Naive thymus-derived CD4-positive, alpha-beta T cell (primary cell): ENCODE measurements at regions of chr6 and their contacts with region 1.

Region 1: DNA sequence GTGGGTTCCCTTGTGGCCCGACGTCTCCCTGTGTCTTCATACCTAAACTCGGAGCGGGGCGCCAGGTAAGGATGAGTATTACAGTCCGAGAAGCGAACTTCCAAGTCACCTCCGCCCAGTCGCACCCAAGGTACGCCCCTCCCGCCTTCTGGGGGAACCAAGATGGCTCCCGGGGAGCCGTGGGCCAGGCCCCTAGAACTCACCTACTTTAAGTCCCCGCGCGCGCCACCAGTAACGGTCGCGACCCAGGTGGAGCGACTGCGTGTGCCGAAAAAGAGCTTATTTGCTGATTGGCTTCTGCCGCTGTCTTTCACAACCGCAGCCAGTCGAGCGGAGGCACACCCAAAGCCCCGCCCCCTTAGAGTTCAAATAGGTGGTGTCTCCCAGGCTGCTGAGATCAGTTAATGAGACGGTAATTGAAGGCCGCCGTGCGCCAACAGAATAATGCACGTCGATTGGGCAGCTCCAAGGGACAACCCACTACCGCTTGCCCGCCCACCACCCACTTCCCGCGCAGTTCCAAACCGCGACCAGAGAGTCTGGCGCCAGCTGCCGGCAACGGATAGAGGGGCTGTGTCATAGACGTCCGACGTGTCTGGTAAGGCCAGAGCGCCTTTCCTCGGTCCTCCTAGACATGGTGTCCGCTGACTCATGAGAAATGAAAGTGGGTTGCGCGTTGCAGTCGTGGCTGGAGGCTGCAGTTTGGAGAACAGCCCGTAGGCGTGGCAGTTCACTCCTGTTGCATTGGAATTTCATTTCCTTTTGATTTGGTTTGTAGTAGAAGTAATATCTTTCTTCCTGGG is at the start of gene MDC1:
- DNase-seq: peak; percentile 83 to 100 (median 99)
- ATAC-seq: peak; percentile 84
- H3K4me3 ChIP-seq: peak within 1 kb of the TSS; percentile 73
- H3K4me3 Mint-ChIP-seq: peak within 1 kb of the TSS; percentile 90 to 99 (median 96)
- H3K27ac ChIP-seq: peak within 1 kb of the TSS; percentile 84
- H3K27ac Mint-ChIP-seq: peak within 1 kb of the TSS; percentile 97 to 100 (median 99)
- H3K4me1 ChIP-seq: peaks cover 20 to 22% of the 10 kb centered on the region in 2 donors
- H3K4me1 Mint-ChIP-seq: peaks cover 30 to 60% (median 52%) of the 10 kb centered on the region in 7 donors
- H3K27me3 ChIP-seq: no peaks in the 10 kb centered on the region
- H3K27me3 Mint-ChIP-seq: no peaks in the 10 kb centered on the region
- total RNA-seq, gene MDC1: 40.3 to 78.9 (median 62.0) TPM

Region 2: DNA sequence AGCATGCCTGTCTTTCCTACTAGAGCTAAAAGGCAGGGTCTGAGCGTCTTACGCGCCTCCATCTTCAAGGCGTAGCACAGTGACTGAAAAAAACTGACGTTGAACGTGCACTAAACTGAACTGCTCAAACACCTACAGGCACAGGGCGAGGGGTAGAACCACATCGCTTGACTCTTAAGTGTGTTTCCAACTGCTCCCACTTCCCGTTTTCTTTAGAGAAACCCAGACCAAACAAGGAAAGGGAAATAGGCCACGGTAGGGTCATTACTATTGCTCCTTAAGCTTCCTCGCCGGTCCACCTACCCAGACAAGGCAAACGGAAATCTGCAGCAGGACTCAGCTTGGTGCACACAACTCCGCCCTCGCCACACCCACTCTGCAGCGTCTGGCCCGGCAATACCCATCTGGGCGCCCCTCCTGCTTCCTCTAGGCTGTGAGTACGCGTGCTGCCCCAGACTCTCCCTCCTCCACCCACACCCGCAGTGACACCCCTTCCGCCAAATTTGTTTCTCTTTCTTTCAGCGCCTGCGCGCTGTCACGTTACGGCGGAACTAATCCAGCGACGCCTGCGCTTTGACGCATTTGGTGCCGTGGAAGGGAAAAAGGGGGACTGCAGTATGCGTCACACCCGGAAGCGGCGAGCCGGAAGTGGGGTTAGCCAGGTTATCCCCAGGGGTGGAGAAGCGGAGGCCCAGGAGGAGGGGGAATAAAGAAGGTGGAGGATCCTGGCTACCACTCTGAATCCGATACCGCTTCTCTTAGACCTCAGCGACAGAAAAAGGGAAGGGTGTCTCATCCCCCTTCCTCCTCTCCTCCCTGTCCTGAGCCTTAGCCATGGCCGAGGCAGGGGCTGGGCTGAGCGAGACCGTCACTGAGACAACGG is 650.4 kb before region 1 on chr6 and contains the start of gene PPP1R11:
- CTCF ChIA-PET with region 1: no interaction called
- POLR2A ChIA-PET with region 1: no interaction called
- intact Hi-C with region 1: loop called in 1 of 2 experiments (anchors 10 kb)
- DNase-seq: peak; percentile 84 to 100 (median 99)
- ATAC-seq: peak; percentile 99
- H3K4me3 ChIP-seq: peak within 1 kb of the TSS; percentile 94
- H3K4me3 Mint-ChIP-seq: peak within 1 kb of the TSS; percentile 87 to 100 (median 98)
- H3K27ac ChIP-seq: peak within 1 kb of the TSS; percentile 96
- H3K27ac Mint-ChIP-seq: peak within 1 kb of the TSS; percentile 96 to 100 (median 99)
- H3K4me1 ChIP-seq: peaks cover 28 to 41% of the 10 kb centered on the region in 2 donors
- H3K4me1 Mint-ChIP-seq: peaks cover 43 to 77% (median 71%) of the 10 kb centered on the region in 7 donors
- H3K27me3 ChIP-seq: no peaks in the 10 kb centered on the region
- H3K27me3 Mint-ChIP-seq: peaks cover 10 to 22% (median 16%) of the 10 kb centered on the region in 5 donors
- total RNA-seq, gene PPP1R11: 49.4 to 67.1 (median 62.7) TPM

Region 3: GRCh38 chr6:30386166-30386565 is 331.1 kb before region 1 on chr6:
- CTCF ChIA-PET with region 1: no interaction called
- POLR2A ChIA-PET with region 1: no interaction called
- intact Hi-C with region 1: no loop called
- DNase-seq: no peak
- ATAC-seq: no peak
- H3K4me3 ChIP-seq: no peak overlapping the region
- H3K4me3 Mint-ChIP-seq: no peak overlapping the region
- H3K27ac ChIP-seq: no peak overlapping the region
- H3K27ac Mint-ChIP-seq: no peak overlapping the region
- H3K4me1 ChIP-seq: no peaks in the 10 kb centered on the region
- H3K4me1 Mint-ChIP-seq: no peaks in the 10 kb centered on the region
- H3K27me3 ChIP-seq: peaks cover 0 to 6% of the 10 kb centered on the region in 2 donors
- H3K27me3 Mint-ChIP-seq: peaks cover 80 to 84% (median 81%) of the 10 kb centered on the region in 5 donors

Region 4: DNA sequence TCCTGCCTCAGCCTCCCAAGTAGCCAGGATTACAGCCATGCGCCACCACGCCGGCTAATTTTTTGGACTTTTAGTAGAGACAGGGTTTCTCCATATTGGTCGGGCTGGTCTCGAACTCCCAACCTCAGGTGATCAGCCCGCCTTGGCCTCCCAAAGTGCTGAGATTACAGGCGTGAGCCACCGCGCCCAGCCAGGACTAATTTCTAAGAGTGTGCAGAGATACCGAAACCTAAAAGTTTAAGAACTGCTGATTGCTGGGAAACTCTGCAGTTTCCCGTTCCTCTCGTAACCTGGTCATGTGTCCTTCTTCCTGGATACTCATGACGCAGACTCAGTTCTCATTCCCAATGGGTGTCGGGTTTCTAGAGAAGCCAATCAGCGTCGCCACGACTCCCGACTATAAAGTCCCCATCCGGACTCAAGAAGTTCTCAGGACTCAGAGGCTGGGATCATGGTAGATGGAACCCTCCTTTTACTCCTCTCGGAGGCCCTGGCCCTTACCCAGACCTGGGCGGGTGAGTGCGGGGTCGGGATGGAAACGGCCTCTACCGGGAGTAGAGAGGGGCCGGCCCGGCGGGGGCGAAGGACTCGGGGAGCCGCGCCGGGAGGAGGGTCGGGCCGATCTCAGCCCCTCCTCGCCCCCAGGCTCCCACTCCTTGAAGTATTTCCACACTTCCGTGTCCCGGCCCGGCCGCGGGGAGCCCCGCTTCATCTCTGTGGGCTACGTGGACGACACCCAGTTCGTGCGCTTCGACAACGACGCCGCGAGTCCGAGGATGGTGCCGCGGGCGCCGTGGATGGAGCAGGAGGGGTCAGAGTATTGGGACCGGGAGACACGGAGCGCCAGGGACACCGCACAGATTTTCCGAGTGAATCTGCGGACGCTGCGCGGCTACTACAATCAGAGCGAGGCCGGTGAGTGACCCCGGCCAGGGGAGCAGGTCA is 227.9 kb before region 1 on chr6 and contains the start of gene HLA-E:
- CTCF ChIA-PET with region 1: interaction called, 14 read pairs
- POLR2A ChIA-PET with region 1: interaction called, 3 read pairs
- intact Hi-C with region 1: loop called (anchors 1 kb)
- DNase-seq: peak; percentile 62 to 99 (median 95)
- ATAC-seq: peak; percentile 89
- H3K4me3 ChIP-seq: peak within 1 kb of the TSS; percentile 83
- H3K4me3 Mint-ChIP-seq: peak within 1 kb of the TSS; percentile 94 to 100 (median 99)
- H3K27ac ChIP-seq: peak within 1 kb of the TSS; percentile 97
- H3K27ac Mint-ChIP-seq: peak within 1 kb of the TSS; percentile 96 to 99 (median 99)
- H3K4me1 ChIP-seq: peaks cover 26 to 33% of the 10 kb centered on the region in 2 donors
- H3K4me1 Mint-ChIP-seq: peaks cover 33 to 61% (median 46%) of the 10 kb centered on the region in 7 donors
- H3K27me3 ChIP-seq: no peaks in the 10 kb centered on the region
- H3K27me3 Mint-ChIP-seq: peaks cover 0 to 7% (median 0%) of the 10 kb centered on the region in 5 donors
- total RNA-seq, gene HLA-E: 614 to 1,412 (median 1,095) TPM

Region 5: GRCh38 chr6:30626484-30627366 is 90.5 kb before region 1 on chr6 and contains the start of gene ATAT1:
- CTCF ChIA-PET with region 1: interaction called, 3 read pairs
- POLR2A ChIA-PET with region 1: interaction called, 4 read pairs
- intact Hi-C with region 1: loop called in 1 of 2 experiments (anchors 1 kb)
- DNase-seq: peak; percentile 80 to 90 (median 85)
- ATAC-seq: peak; percentile 100
- H3K4me3 ChIP-seq: peak within 1 kb of the TSS; percentile 84
- H3K4me3 Mint-ChIP-seq: peak within 1 kb of the TSS; percentile 88 to 97 (median 92)
- H3K27ac ChIP-seq: peak within 1 kb of the TSS; percentile 92
- H3K27ac Mint-ChIP-seq: peak within 1 kb of the TSS; percentile 89 to 97 (median 96)
- H3K4me1 ChIP-seq: peaks cover 10 to 13% of the 10 kb centered on the region in 2 donors
- H3K4me1 Mint-ChIP-seq: peaks cover 15 to 35% (median 24%) of the 10 kb centered on the region in 7 donors
- H3K27me3 ChIP-seq: no peaks in the 10 kb centered on the region
- H3K27me3 Mint-ChIP-seq: no peaks in the 10 kb centered on the region
- total RNA-seq, gene ATAT1: 7.0 to 12.0 (median 9.5) TPM

Region 6: DNA sequence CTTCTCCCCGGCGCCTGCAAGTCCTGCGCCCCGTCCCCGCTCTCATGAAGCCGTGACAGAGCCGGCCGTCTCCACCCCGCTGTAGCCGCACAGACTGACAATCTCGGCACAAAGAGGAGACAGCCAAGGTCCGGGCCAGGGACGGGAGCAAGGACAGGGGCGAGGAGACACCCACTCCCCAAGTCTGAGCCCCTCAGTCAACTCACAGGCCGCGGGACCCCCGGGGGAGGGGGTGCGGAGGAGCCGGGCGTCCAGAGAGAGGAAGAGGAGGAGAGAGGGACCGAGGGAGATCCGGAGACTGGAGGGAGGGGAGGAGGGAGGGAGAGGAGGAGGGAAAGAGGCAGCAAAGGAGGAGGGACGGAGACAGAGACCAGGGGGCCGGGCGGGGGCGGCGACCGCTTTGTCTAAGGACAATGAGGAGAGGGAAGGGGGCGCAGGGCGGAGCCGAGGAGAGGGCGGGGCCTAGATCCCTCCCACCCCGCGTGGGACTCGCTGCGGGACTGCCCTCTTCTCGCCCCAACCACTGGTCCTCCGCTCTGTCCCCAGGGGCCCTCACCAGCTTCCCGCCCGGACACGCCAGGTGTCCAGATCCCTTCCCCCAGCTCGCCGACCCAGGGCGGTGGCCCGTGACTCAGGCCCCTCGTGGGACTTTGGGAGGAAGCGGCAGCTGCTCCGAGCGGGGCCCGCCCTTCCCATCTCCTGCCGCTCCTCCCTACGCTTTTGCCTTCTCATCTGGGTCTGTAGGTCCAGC is 30.2 kb before region 1 on chr6:
- CTCF ChIA-PET with region 1: interaction called, 304 read pairs
- POLR2A ChIA-PET with region 1: interaction called, 499 read pairs
- intact Hi-C with region 1: loop called (anchors 1 kb)
- DNase-seq: peak; percentile 34 to 89 (median 42)
- ATAC-seq: peak; percentile 58
- H3K4me3 ChIP-seq: peak overlapping the region; percentile 98
- H3K4me3 Mint-ChIP-seq: peak overlapping the region; percentile 90 to 100 (median 97)
- H3K27ac ChIP-seq: peak overlapping the region; percentile 95
- H3K27ac Mint-ChIP-seq: peak overlapping the region; percentile 88 to 99 (median 97)
- H3K4me1 ChIP-seq: peaks cover 21 to 31% of the 10 kb centered on the region in 2 donors
- H3K4me1 Mint-ChIP-seq: peaks cover 45 to 56% (median 46%) of the 10 kb centered on the region in 7 donors
- H3K27me3 ChIP-seq: no peaks in the 10 kb centered on the region
- H3K27me3 Mint-ChIP-seq: no peaks in the 10 kb centered on the region

Region 7: GRCh38 chr6:30907758-30908591 is 190.7 kb after region 1 on chr6 and contains the start of gene GTF2H4:
- CTCF ChIA-PET with region 1: no interaction called
- POLR2A ChIA-PET with region 1: interaction called, 4 read pairs
- intact Hi-C with region 1: loop called in 1 of 2 experiments (anchors 1 kb)
- DNase-seq: peak; percentile 77 to 96 (median 89)
- ATAC-seq: peak; percentile 99
- H3K4me3 ChIP-seq: peak within 1 kb of the TSS; percentile 90
- H3K4me3 Mint-ChIP-seq: peak within 1 kb of the TSS; percentile 95 to 100 (median 99)
- H3K27ac ChIP-seq: peak within 1 kb of the TSS; percentile 78
- H3K27ac Mint-ChIP-seq: peak within 1 kb of the TSS; percentile 72 to 95 (median 82)
- H3K4me1 ChIP-seq: peaks cover 6 to 9% of the 10 kb centered on the region in 2 donors
- H3K4me1 Mint-ChIP-seq: peaks cover 15 to 34% (median 22%) of the 10 kb centered on the region in 7 donors
- H3K27me3 ChIP-seq: no peaks in the 10 kb centered on the region
- H3K27me3 Mint-ChIP-seq: no peaks in the 10 kb centered on the region
- total RNA-seq, gene GTF2H4: 18.8 to 42.3 (median 32.2) TPM

Region 8: DNA sequence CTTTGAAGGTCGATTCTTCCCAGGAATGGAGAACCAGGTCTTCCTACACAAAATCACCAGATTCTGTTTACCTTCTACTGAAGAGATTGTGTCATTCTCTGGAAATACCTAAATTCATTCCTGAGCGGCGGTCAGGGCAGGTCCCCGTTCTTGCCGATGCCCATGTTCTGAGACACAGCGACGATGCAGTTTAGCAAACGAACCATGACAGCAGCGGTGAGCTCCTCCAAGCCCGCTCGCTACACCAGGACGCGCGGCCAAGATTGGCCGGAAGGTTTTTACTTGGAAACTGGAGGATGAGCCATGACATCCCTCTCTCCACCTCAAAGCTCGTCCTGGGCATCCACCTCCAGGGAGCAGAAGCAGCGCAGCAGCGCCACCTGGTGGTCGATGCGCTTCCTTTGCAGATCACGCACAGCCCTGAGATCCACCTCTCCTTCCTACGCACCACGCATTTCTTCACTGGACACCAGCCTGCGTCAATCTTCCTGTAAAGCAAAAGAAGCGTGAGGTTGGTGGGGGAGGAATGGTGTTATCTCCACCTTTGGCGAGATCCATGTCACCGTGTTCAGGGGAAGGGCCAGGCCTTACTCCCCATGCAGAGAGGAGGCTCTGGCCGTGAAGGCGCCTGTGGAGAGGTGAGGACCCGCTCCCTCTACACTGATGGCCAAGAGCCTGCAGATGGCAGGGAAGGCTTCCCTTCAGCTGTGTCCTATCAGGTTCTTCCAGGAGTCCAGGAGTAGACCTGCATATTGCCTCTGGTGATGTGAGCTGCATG is 649.6 kb after region 1 on chr6:
- CTCF ChIA-PET with region 1: no interaction called
- POLR2A ChIA-PET with region 1: no interaction called
- intact Hi-C with region 1: no loop called
- DNase-seq: peak; percentile 78 to 94 (median 86)
- ATAC-seq: peak; percentile 99
- H3K4me3 ChIP-seq: peak overlapping the region; percentile 58
- H3K4me3 Mint-ChIP-seq: peak overlapping the region; percentile 80 to 92 (median 84)
- H3K27ac ChIP-seq: peak overlapping the region; percentile 41
- H3K27ac Mint-ChIP-seq: peak overlapping the region; percentile 40 to 92 (median 79)
- H3K4me1 ChIP-seq: peaks cover 0 to 4% of the 10 kb centered on the region in 2 donors
- H3K4me1 Mint-ChIP-seq: peaks cover 3 to 32% (median 17%) of the 10 kb centered on the region in 7 donors
- H3K27me3 ChIP-seq: no peaks in the 10 kb centered on the region
- H3K27me3 Mint-ChIP-seq: peaks cover 0 to 77% (median 19%) of the 10 kb centered on the region in 5 donors